MCF 10A (cell line): ENCODE measurements at regions of chr10 and their contacts with region 1.

Region 1: GRCh38 chr10:84537447-84537931 is 209.1 kb downstream of the CCSER2 start:
- DNase-seq: peak; percentile 68
- H3K4me3 Mint-ChIP-seq: no peak overlapping the region
- H3K27ac Mint-ChIP-seq: no peak overlapping the region
- H3K4me1 Mint-ChIP-seq: peaks cover 25% of the 10 kb centered on the region
- H3K27me3 Mint-ChIP-seq: no peaks in the 10 kb centered on the region
- CTCF ChIP-seq: peak; percentile 70

Region 2: DNA sequence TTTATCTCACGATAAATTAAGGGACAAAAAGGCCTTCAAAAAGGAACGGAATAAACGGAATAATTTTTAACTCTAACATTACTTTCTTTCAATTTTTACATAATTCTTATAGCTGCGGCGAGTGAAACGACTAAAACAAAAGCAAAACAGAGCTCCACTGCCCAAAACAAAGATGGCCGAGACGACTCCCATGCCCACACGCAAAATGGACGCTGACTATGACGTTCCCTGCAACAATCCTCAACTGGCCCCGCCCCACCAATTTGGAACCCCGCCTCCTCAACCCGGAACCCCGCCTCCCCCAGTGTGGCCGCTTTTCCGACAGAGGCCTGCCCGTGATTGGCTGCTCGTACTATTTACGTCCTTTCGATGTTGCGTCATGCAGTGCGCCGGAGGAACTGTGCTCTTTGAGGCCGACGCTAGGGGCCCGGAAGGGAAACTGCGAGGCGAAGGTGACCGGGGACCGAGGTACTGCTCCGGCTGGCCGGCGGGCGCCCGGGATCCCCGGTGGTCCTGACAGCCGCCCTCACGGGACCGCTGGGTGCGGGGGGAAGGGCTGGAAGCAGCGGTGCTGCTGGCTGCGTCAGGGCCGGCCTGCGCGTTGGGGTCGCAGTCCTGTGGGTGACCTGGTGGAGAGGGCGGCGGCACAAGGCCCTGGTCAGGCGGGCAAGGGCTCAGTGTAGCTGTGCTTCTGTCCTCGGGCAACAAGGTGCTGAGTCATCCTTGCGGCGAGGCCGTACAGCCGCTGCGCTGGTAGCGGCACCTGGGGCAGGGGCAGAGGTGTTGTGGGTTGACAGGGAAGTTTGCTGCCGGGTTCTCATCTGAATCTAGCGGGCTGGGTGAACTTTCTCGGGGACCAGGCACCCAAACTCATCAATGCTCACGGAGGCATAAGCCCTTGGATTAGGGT is 398.1 kb before region 1 on chr10 and contains the start of gene GHITM:
- CTCF ChIA-PET with region 1: interaction called, 5 read pairs
- POLR2A ChIA-PET with region 1: no interaction called
- intact Hi-C with region 1: loop called (anchors 10 kb)
- DNase-seq: peak; percentile 99
- H3K4me3 Mint-ChIP-seq: peak within 1 kb of the TSS; percentile 92
- H3K27ac Mint-ChIP-seq: peak within 1 kb of the TSS; percentile 98
- H3K4me1 Mint-ChIP-seq: peaks cover 16% of the 10 kb centered on the region
- H3K27me3 Mint-ChIP-seq: no peaks in the 10 kb centered on the region
- CTCF ChIP-seq: peak; percentile 27
- total RNA-seq, gene GHITM: 272 and 389 TPM in 2 replicates

Region 3: DNA sequence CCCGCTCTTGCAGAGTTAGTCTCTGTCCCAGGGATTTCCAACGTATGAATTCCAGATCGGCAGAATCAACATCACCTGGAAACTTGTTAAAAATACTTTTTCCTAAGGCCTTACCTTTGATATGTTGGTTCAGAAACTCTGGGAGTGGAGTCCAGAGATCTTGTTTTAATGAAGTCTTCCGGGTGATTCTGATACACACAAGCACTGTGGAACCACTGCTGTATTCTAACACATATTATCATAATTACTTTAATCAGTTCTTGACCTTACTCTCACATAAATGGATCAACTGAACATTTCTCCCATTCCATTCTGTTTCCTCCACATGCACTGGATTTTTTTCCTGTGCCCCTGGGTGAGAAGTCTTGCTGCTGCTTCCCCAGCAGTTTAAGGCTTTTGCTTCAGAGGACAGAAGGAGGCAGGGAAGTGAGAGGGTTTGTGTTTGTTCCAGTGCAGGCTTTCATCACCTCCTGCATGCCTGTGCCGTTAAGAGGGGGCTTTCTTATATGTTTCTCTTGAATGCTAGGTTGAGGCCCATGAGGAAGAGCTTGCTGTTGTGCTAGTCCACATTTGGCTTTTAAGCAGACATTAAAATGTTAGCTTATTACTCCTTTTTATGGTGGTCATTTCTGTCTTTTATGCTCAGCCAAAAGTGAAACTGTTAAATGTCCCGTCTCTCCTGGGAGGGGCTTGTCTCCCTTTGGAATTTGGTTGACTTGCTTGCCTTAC is 176.7 kb before region 1 on chr10:
- CTCF ChIA-PET with region 1: interaction called, 188 read pairs
- POLR2A ChIA-PET with region 1: interaction called, 3 read pairs
- intact Hi-C with region 1: no loop called
- DNase-seq: no peak
- H3K4me3 Mint-ChIP-seq: peak overlapping the region; percentile 56
- H3K27ac Mint-ChIP-seq: no peak overlapping the region
- H3K4me1 Mint-ChIP-seq: peaks cover 32% of the 10 kb centered on the region
- H3K27me3 Mint-ChIP-seq: no peaks in the 10 kb centered on the region
- CTCF ChIP-seq: no peak

Region 4: DNA sequence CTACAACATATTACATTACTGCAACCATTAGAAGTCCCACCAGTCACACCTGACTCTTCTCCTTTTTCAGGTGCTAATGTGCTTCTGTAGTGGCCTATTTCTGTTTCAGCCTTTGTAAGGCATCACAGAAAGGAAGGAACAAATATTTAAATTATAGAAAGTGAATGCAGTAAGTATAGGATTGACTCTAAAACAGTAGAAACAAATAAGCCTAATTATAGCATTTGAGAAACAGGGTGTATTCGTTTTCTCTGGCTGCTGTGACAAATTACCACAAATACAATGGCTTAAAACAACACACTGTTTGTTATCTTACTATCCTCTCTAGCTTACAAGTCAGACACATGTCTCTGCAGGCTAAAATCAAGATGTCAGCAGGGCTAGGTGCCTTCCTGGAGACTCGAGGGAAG is 139.7 kb before region 1 on chr10:
- CTCF ChIA-PET with region 1: interaction called, 17 read pairs
- POLR2A ChIA-PET with region 1: no interaction called
- intact Hi-C with region 1: no loop called
- DNase-seq: no peak
- H3K4me3 Mint-ChIP-seq: no peak overlapping the region
- H3K27ac Mint-ChIP-seq: no peak overlapping the region
- H3K4me1 Mint-ChIP-seq: peaks cover 26% of the 10 kb centered on the region
- H3K27me3 Mint-ChIP-seq: no peaks in the 10 kb centered on the region
- CTCF ChIP-seq: no peak

Region 5: GRCh38 chr10:84460520-84460919 is 77.0 kb before region 1 on chr10:
- CTCF ChIA-PET with region 1: no interaction called
- POLR2A ChIA-PET with region 1: no interaction called
- intact Hi-C with region 1: no loop called
- DNase-seq: no peak
- H3K4me3 Mint-ChIP-seq: no peak overlapping the region
- H3K27ac Mint-ChIP-seq: no peak overlapping the region
- H3K4me1 Mint-ChIP-seq: peaks cover 10% of the 10 kb centered on the region
- H3K27me3 Mint-ChIP-seq: no peaks in the 10 kb centered on the region
- CTCF ChIP-seq: no peak

Region 6: DNA sequence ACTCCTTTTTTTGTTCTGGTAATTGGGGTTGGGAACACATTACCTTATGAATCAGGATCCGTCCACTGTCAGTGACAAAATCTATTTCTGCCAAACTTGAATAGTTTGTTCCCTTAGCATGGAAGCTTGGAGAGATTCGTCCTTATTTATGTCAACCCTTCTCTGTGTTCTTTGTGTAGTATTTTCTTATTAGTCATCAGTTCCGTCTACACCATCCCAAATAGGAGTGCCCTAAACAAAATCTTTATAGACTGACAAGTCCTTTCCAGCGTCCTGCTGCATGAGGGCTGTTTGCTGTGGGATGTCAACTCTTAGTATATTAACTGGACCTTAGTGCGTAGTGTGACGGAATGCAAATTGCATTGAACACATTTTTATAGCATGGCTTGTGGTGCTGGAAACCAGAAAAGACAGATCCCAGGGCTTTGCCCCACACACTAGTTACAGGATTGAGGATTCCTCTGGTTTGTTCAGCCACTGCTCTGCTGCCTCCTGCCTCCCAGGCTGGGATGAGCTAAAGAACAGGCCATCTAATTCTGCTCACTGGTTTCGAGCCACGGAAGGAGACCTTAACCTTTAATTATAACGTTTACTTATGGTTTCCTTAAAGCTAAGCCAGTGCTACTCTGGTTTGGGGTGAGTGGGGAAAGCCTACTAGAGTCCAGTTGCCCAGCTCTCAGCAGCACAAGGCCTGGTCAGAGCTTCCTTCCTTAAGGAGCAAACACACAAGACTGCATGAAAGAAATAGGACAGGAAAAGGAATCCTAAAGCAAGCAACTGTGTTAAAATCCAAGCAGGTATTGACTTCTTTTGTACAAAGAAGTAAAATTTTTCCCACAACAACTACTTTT is 14.7 kb before region 1 on chr10:
- CTCF ChIA-PET with region 1: interaction called, 12 read pairs
- POLR2A ChIA-PET with region 1: no interaction called
- intact Hi-C with region 1: no loop called
- DNase-seq: no peak
- H3K4me3 Mint-ChIP-seq: no peak overlapping the region
- H3K27ac Mint-ChIP-seq: no peak overlapping the region
- H3K4me1 Mint-ChIP-seq: no peaks in the 10 kb centered on the region
- H3K27me3 Mint-ChIP-seq: no peaks in the 10 kb centered on the region
- CTCF ChIP-seq: no peak

Region 7: DNA sequence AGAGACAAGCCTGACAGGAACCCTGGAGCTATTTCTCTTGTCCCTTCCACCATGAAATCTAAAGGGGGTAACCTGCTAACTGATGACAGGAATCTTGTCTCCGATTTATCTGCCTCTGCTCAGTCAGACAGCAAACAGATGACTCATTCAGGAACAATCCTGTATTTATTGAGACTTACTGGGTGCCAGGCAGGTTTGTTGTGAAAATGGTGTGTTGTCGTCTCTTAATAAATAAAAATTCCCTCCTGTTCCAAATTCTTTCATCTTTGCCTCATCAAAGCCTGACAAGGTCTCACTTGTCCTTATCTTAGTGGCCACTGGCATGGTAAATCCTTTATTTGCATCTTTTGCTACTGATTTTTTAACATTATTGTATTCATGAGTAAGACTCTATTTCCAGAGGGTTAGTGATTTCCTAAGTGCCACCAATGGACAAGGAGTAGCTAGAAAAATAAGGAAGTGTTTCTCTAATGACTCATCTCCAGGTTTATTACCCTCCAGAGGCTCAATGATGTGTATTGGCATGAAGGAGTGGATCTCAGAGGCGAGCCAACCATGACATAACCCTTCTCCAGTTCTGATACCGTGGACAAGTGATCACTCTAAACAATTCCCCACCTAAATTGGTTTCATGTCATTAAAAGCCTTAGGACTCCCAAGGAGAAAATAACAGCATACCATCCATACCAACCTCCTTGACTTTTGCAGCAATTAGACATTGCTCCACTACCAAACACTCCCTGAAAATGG is 1105.1 kb after region 1 on chr10:
- CTCF ChIA-PET with region 1: no interaction called
- POLR2A ChIA-PET with region 1: no interaction called
- intact Hi-C with region 1: loop called (anchors 10 kb)
- DNase-seq: peak; percentile 85
- H3K4me3 Mint-ChIP-seq: peak overlapping the region; percentile 12
- H3K27ac Mint-ChIP-seq: peak overlapping the region; percentile 93
- H3K4me1 Mint-ChIP-seq: peaks cover 43% of the 10 kb centered on the region
- H3K27me3 Mint-ChIP-seq: no peaks in the 10 kb centered on the region
- CTCF ChIP-seq: no peak

Region 8: GRCh38 chr10:85808259-85808658 is 1270.8 kb after region 1 on chr10:
- CTCF ChIA-PET with region 1: no interaction called
- POLR2A ChIA-PET with region 1: no interaction called
- intact Hi-C with region 1: no loop called
- DNase-seq: no peak
- H3K4me3 Mint-ChIP-seq: no peak overlapping the region
- H3K27ac Mint-ChIP-seq: no peak overlapping the region
- H3K4me1 Mint-ChIP-seq: no peaks in the 10 kb centered on the region
- H3K27me3 Mint-ChIP-seq: no peaks in the 10 kb centered on the region
- CTCF ChIP-seq: no peak